ENCODE measurements at regions of chr20 and their contacts with region 1.

Region 1: GRCh38 chr20:17569616-17570346 is at the start of gene DSTN:
- DNase-seq: peak; percentile 84
- H3K4me3 Mint-ChIP-seq: peak within 1 kb of the TSS; percentile 91
- H3K27ac Mint-ChIP-seq: peak within 1 kb of the TSS; percentile 78
- H3K4me1 Mint-ChIP-seq: peaks cover 25% of the 10 kb centered on the region
- H3K27me3 Mint-ChIP-seq: no peaks in the 10 kb centered on the region
- total RNA-seq, gene DSTN: 68.9 to 69.7 TPM

Region 2: GRCh38 chr20:17298171-17298570 is 271.6 kb before region 1 on chr20:
- CTCF ChIA-PET with region 1: no interaction called
- intact Hi-C with region 1: no loop called
- DNase-seq: no peak
- H3K4me3 Mint-ChIP-seq: no peak overlapping the region
- H3K27ac Mint-ChIP-seq: no peak overlapping the region
- H3K4me1 Mint-ChIP-seq: no peaks in the 10 kb centered on the region
- H3K27me3 Mint-ChIP-seq: peaks cover 4% of the 10 kb centered on the region

Region 3: GRCh38 chr20:17419479-17420041 is 150.2 kb before region 1 on chr20:
- CTCF ChIA-PET with region 1: no interaction called
- intact Hi-C with region 1: no loop called
- DNase-seq: no peak
- H3K4me3 Mint-ChIP-seq: no peak overlapping the region
- H3K27ac Mint-ChIP-seq: no peak overlapping the region
- H3K4me1 Mint-ChIP-seq: no peaks in the 10 kb centered on the region
- H3K27me3 Mint-ChIP-seq: peaks cover 7% of the 10 kb centered on the region

Region 4: GRCh38 chr20:17524560-17524959 is 45.2 kb before region 1 on chr20:
- CTCF ChIA-PET with region 1: no interaction called
- intact Hi-C with region 1: no loop called
- DNase-seq: no peak
- H3K4me3 Mint-ChIP-seq: no peak overlapping the region
- H3K27ac Mint-ChIP-seq: no peak overlapping the region
- H3K4me1 Mint-ChIP-seq: no peaks in the 10 kb centered on the region
- H3K27me3 Mint-ChIP-seq: peaks cover 5% of the 10 kb centered on the region

Region 5: GRCh38 chr20:17536944-17537444 is 32.8 kb before region 1 on chr20:
- CTCF ChIA-PET with region 1: interaction called, 7 read pairs
- intact Hi-C with region 1: loop called (anchors 1 kb)
- DNase-seq: peak; percentile 78
- H3K4me3 Mint-ChIP-seq: no peak overlapping the region
- H3K27ac Mint-ChIP-seq: no peak overlapping the region
- H3K4me1 Mint-ChIP-seq: no peaks in the 10 kb centered on the region
- H3K27me3 Mint-ChIP-seq: peaks cover 2% of the 10 kb centered on the region

Region 6: GRCh38 chr20:17558154-17558940 is 11.4 kb before region 1 on chr20:
- CTCF ChIA-PET with region 1: interaction called, 3 read pairs
- intact Hi-C with region 1: loop called (anchors 1 kb)
- DNase-seq: peak; percentile 37
- H3K4me3 Mint-ChIP-seq: no peak overlapping the region
- H3K27ac Mint-ChIP-seq: peak overlapping the region; percentile 79
- H3K4me1 Mint-ChIP-seq: peaks cover 37% of the 10 kb centered on the region
- H3K27me3 Mint-ChIP-seq: no peaks in the 10 kb centered on the region

Region 7: DNA sequence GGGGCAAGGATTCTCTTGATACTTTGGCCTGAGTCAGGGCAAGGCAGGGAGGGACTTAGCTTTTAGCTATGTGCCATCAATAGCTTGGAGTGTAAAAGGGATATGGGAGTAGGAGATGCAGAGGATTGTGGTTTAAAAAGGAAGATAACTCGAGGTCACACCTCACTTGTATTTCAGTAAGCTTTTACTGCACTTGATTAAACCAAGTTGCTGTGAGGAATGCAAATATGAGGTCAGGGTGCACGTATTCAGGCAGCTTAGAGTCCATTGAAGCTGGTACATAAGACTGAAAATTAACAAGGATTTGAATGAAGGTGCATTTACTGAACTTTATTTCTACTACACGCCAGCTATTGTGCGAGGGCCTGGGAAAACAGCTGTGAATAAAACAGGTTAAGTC is 32.2 kb after region 1 on chr20:
- CTCF ChIA-PET with region 1: interaction called, 8 read pairs
- intact Hi-C with region 1: loop called (anchors 2 kb)
- DNase-seq: no peak
- H3K4me3 Mint-ChIP-seq: no peak overlapping the region
- H3K27ac Mint-ChIP-seq: no peak overlapping the region
- H3K4me1 Mint-ChIP-seq: peaks cover 7% of the 10 kb centered on the region
- H3K27me3 Mint-ChIP-seq: no peaks in the 10 kb centered on the region

Region 8: DNA sequence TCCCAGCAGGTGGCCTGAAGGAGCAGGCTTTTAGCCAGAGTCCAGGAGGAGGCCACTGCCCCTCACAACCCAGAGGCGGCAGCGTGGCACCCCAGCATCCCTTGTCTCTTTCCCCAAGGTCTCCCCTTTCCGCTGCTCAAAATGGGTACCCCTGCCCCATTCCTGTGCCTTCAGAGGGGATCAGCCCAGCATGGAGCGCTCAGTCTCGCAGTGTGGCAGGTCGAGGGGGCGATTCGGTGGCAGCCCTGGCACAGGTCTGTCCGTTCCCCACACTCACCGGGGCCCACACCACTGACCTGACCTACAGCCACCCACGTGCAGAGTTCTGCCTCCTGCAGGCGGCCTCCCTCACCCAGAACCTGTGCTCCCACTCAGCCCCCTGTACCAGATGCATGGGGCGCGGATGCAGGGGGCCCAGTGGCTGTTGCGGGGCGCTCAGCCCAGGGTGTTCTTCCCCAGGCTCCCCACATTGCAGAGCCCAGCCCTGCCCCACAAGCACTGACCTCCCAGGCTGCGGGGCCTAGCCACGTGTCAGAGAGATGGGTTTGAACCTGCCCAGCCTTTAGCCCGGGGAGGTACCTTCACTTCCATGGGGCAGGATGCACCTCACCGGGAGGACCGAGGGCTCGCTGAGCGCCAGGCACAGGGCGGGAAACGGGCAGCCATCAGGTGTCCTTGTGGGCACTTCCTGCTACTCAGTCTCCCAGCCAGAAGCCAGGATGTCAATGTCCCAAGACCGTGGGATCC is 41.9 kb after region 1 on chr20:
- CTCF ChIA-PET with region 1: interaction called, 6 read pairs
- intact Hi-C with region 1: loop called (anchors 1 kb)
- DNase-seq: no peak
- H3K4me3 Mint-ChIP-seq: peak overlapping the region; percentile 38
- H3K27ac Mint-ChIP-seq: peak overlapping the region; percentile 82
- H3K4me1 Mint-ChIP-seq: peaks cover 34% of the 10 kb centered on the region
- H3K27me3 Mint-ChIP-seq: no peaks in the 10 kb centered on the region

Region 9: GRCh38 chr20:17662333-17663039 is 92.7 kb after region 1 on chr20:
- CTCF ChIA-PET with region 1: interaction called, 5 read pairs
- intact Hi-C with region 1: loop called (anchors 5 kb)
- DNase-seq: no peak
- H3K4me3 Mint-ChIP-seq: no peak overlapping the region
- H3K27ac Mint-ChIP-seq: peak overlapping the region; percentile 47
- H3K4me1 Mint-ChIP-seq: peaks cover 34% of the 10 kb centered on the region
- H3K27me3 Mint-ChIP-seq: no peaks in the 10 kb centered on the region

Region 10: GRCh38 chr20:18137412-18138265 is 567.9 kb after region 1 on chr20 and contains the starts of genes KAT14 and PET117:
- CTCF ChIA-PET with region 1: no interaction called
- intact Hi-C with region 1: loop called (anchors 10 kb)
- DNase-seq: peak; percentile 91
- H3K4me3 Mint-ChIP-seq: peak within 1 kb of the TSS; percentile 75
- H3K27ac Mint-ChIP-seq: peak within 1 kb of the TSS; percentile 77
- H3K4me1 Mint-ChIP-seq: peaks cover 30% of the 10 kb centered on the region
- H3K27me3 Mint-ChIP-seq: no peaks in the 10 kb centered on the region
- total RNA-seq, gene KAT14: 10.3 to 12.9 TPM
- total RNA-seq, gene PET117: 16.7 to 17.9 TPM